ENCODE measurements at regions of chr21 and their contacts with region 1.

Region 1: GRCh38 chr21:16082038-16082816 is 352.4 kb downstream of the USP25 start:
- DNase-seq: no peak
- ATAC-seq: no peak

Region 2: DNA sequence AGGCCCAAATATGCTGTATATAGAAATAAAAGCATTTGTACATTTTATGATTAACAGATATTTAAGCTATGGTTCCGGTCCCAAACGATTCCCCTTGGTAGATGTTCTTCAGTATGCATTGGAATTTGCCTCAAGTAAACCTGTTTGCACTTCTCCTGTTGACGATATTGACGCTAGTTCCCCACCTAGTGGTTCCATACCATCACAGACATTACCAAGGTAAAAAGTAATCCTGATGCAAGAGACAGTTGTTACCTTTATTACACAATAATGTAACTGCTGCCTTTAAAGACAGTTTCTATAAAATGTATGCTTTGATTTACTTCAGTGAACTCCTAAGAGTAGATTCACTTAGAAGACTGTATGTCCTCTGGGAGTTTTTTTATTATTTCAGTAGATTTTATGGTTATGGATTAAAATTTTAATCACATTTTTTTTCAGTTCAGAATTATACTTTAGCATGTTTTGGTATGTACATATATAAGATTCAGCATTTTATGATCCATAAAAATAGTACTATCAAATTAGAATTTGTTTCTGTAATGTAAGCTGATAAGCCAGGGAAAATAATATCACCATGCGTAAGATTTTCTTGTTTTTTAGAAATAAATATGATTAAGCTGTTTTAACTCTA is 256.0 kb before region 1 on chr21:
- intact Hi-C with region 1: no loop called
- DNase-seq: no peak
- ATAC-seq: no peak

Region 3: GRCh38 chr21:15967661-15968060 is 114.6 kb before region 1 on chr21:
- intact Hi-C with region 1: no loop called
- DNase-seq: no peak
- ATAC-seq: no peak

Region 4: DNA sequence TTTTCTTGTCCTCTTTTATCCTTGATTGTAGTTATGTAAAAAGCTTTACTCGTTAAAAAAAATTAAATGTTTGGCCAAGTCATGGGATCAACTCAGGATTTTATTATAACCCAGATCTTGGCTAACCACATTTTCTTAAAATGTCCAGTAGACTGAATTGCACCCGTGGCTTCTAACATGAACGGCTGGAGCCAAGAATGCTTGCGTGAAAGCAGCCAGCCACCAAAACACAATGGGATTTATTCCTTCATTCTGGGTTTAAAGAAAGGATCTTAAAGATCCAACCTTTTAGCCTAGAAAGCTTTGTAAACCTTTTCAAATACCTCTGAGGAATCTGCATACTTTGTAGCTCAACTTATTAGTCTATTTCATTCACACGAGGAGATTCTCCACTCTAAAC is 51.9 kb after region 1 on chr21:
- intact Hi-C with region 1: no loop called
- DNase-seq: no peak
- ATAC-seq: no peak

Region 5: DNA sequence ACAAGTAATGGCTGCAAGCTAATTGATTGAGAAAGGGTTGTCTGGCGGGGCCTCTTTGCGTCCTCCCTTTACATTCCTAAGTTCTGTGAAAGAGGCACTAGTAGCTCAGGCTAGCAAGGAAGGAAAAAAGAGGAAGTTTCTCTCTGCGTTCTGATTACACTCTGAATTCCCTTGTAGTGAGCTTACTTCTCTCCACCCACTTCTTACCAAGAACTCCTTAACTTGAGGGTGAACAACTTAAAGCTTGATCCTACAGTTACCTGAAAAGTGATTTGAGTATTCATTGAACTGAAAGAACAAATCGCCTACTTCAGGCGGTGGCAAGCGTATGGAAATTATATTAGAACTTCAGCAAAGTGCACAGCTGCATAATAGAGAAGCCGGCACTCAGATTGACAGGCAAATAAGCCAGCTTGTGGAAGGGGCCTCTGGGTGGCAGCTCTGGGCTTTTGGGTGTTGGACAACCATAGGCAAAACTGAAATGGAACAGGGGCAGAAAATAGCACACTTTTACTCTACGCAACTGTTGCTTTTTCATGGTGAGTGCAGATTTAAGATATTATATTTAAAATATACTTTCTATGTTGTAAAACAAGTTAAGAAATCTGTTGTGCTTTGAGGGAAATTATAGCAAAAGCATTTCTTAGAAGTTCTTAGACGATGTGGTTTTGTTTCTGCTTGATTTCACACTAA is 112.0 kb after region 1 on chr21:
- intact Hi-C with region 1: loop called (anchors 10 kb)
- DNase-seq: peak; percentile 73
- ATAC-seq: peak; percentile 92

Region 6: GRCh38 chr21:16330082-16330907 is 248.1 kb after region 1 on chr21:
- intact Hi-C with region 1: loop called (anchors 2 kb)
- DNase-seq: no peak
- ATAC-seq: peak; percentile 98

Region 7: GRCh38 chr21:16633831-16634459 is 551.7 kb after region 1 on chr21:
- intact Hi-C with region 1: loop called (anchors 10 kb)
- DNase-seq: no peak
- ATAC-seq: peak; percentile 69

Region 8: GRCh38 chr21:17045214-17045853 is 963.1 kb after region 1 on chr21:
- intact Hi-C with region 1: loop called (anchors 10 kb)
- DNase-seq: no peak
- ATAC-seq: no peak

Region 9: GRCh38 chr21:17269760-17270159 is 1187.5 kb after region 1 on chr21:
- intact Hi-C with region 1: loop called (anchors 5 kb)
- DNase-seq: no peak
- ATAC-seq: peak; percentile 71

Measured in Right ventricle myocardium inferior (tissue), 1 donor.